AG04450 (cell line): ENCODE measurements at regions of chrX and their contacts with region 1.

Region 1: DNA sequence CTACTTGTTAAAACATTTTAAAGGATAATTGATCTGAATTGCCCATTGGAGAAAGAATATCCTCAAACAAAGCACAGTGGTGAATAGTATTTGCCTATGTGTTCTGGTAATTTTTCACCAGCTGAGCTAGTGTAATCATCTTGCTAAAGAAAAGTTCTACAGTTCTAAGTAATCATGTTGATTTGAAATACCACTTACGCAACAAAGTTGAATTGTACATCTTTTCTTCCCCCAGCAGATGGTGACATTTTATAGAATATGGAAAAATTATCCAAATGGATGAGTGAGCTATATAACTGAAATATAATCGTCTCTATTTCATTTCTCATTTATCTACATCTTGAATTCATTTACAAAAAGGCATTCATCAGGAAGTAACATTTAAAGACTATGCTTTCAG is 9.7 kb upstream of the ZNF674 start:
- DNase-seq: no peak
- H3K4me3 ChIP-seq: no peak overlapping the region
- H3K27ac ChIP-seq: no peak overlapping the region
- H3K27me3 ChIP-seq: no peaks in the 10 kb centered on the region
- CTCF ChIP-seq: peak; percentile 32

Region 2: GRCh38 chrX:46642145-46642544 is 87.2 kb after region 1 on chrX:
- CTCF ChIA-PET with region 1: interaction called, 10 read pairs
- POLR2A ChIA-PET with region 1: no interaction called
- DNase-seq: no peak
- H3K4me3 ChIP-seq: no peak overlapping the region
- H3K27ac ChIP-seq: no peak overlapping the region
- H3K27me3 ChIP-seq: no peaks in the 10 kb centered on the region
- CTCF ChIP-seq: peak; percentile 38; the same call in 1 of the 2 replicates

Region 3: DNA sequence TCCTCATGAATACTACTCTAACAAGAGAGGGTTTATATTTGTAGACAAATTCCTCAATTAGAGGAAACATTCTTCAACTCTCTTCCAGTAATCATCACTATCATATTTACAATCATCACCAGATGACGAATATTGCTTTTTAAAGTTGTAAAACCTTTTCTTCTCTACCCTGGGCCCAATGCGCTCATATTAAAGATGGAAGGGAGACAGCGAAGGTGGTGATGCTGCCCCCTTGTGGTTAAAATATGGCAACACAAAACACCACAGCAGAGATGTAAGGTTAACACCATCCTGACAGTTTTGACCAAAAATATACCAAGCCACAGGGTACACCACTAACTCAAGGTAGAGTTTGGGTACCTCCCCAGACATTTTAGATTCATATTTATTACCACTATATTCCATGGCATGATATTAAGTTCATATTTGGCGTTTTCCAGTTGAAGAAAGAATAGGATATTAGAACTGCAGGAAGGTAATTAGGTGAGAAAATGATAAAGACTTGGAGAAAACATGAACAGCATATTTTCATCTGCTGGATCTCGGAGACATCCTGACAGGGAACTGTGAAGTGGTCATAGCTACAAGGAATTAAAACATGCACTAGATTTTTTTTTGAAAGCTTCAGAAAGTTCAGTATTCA is 131.2 kb after region 1 on chrX:
- CTCF ChIA-PET with region 1: interaction called, 13 read pairs
- POLR2A ChIA-PET with region 1: interaction called, 6 read pairs
- DNase-seq: no peak
- H3K4me3 ChIP-seq: no peak overlapping the region
- H3K27ac ChIP-seq: no peak overlapping the region
- H3K27me3 ChIP-seq: no peaks in the 10 kb centered on the region
- CTCF ChIP-seq: peak; percentile 62